ENCODE measurements at regions of chr4 and their contacts with region 1.

Region 1: GRCh38 chr4:15906024-15906443 is 32.5 kb downstream of the FGFBP1 start:
- DNase-seq: peak; percentile 91
- H3K4me3 Mint-ChIP-seq: no peak overlapping the region
- H3K27ac Mint-ChIP-seq: peak overlapping the region; percentile 68
- H3K4me1 Mint-ChIP-seq: peaks cover 18% of the 10 kb centered on the region
- H3K27me3 Mint-ChIP-seq: no peaks in the 10 kb centered on the region
- CTCF ChIP-seq: no peak

Region 2: GRCh38 chr4:15303052-15303641 is 602.9 kb before region 1 on chr4:
- CTCF ChIA-PET with region 1: no interaction called
- intact Hi-C with region 1: no loop called
- DNase-seq: no peak
- H3K4me3 Mint-ChIP-seq: no peak overlapping the region
- H3K27ac Mint-ChIP-seq: no peak overlapping the region
- H3K4me1 Mint-ChIP-seq: no peaks in the 10 kb centered on the region
- H3K27me3 Mint-ChIP-seq: peaks cover 67% of the 10 kb centered on the region
- CTCF ChIP-seq: no peak

Region 3: DNA sequence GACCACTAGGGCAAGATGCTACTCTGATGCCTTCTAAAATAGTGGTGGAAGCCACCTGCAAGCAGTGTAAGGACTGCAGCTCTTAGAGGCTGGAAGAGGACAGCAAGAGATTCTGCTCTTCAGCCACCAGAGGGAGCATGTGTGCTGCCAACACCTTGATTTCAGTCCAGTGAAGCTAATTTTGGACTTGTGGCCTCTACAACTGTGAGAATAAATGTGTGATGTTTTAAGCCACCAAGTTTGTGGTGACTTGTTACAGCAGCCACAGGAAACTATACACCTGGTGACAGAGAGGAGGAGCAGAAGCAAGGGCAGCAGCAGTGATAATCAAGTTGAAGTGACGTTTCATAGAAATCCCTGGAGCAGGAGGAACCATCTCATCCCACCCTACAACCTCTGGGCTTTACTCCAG is 23.4 kb before region 1 on chr4:
- CTCF ChIA-PET with region 1: interaction called, 16 read pairs
- intact Hi-C with region 1: no loop called
- DNase-seq: peak; percentile 54
- H3K4me3 Mint-ChIP-seq: no peak overlapping the region
- H3K27ac Mint-ChIP-seq: peak overlapping the region; percentile 77
- H3K4me1 Mint-ChIP-seq: peaks cover 27% of the 10 kb centered on the region
- H3K27me3 Mint-ChIP-seq: no peaks in the 10 kb centered on the region
- CTCF ChIP-seq: peak; percentile 71

Region 4: DNA sequence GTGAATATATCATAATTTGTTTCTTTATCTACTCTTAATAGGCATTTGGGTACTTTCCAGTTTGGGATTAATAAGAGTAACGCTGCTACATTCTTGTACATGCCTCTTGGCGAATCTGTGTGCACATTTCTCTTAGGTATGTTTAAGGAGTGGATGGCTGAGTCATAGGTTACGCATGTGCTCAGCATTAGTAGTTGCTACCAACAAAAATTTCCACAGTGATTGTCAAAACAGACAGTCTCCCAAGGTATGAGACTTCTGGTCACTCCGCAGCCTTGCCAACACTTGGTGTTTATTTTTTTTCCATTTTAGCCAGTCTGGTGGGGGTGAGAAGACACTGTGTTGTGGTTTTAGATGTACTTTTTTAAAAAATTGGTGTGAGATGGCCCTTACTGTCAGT is 12.1 kb before region 1 on chr4:
- CTCF ChIA-PET with region 1: interaction called, 5 read pairs
- intact Hi-C with region 1: loop called (anchors 1 kb)
- DNase-seq: peak; percentile 53
- H3K4me3 Mint-ChIP-seq: no peak overlapping the region
- H3K27ac Mint-ChIP-seq: peak overlapping the region; percentile 100
- H3K4me1 Mint-ChIP-seq: peaks cover 51% of the 10 kb centered on the region
- H3K27me3 Mint-ChIP-seq: no peaks in the 10 kb centered on the region
- CTCF ChIP-seq: no peak

Region 5: DNA sequence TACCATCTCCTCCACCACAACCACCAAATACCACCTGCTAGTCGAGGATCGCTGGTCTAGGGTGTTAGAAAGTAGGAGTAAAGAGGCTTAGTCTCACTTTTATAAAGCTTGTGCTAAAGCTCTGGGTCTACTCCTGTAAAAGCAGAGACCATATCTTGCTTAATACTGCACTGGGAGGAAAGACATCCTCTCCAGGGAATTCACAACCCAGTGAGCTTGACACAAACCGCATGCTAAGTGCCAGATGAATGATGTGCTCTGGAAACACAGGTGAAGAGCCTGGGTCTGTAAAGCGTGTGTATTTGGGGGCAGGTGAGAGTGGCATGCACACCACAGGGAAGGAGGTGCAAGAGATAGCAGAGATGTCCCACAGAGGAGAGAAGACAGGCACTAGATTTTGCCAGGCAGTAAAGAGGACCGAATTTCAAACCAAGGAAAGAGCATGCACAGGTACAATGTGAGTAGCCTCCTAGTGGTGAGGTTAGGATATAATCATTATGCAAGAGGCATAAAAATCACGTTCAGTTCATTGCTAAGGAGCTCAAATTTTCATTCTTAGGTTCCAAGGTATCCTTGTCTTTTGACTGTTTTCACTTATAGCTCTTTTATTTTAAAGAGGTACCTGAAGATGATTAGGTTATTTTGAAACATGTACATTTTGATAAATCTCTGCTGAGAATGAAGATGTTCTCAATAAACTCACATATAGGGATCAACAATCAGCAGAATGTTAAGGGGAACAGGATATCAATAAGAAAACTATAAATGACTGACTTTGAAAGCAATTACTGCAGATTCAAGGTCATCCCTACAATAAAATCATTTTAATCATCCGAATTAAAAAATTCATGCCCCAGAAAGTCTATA is 299.5 kb after region 1 on chr4:
- CTCF ChIA-PET with region 1: no interaction called
- intact Hi-C with region 1: loop called (anchors 5 kb)
- DNase-seq: no peak
- H3K4me3 Mint-ChIP-seq: no peak overlapping the region
- H3K27ac Mint-ChIP-seq: no peak overlapping the region
- H3K4me1 Mint-ChIP-seq: peaks cover 16% of the 10 kb centered on the region
- H3K27me3 Mint-ChIP-seq: no peaks in the 10 kb centered on the region
- CTCF ChIP-seq: peak; percentile 30

Measured in Calu3 (cell line).